Lower leg skin (tissue), 4 donors: ENCODE measurements at regions of chr17 and their contacts with region 1.

Region 1: GRCh38 chr17:45135192-45135977 is at the start of gene ACBD4:
- DNase-seq: peak; percentile 97 to 99
- H3K4me3 ChIP-seq: peak within 1 kb of the TSS; percentile 39
- CTCF ChIP-seq: peak; percentile 58 to 100 (median 100)
- POLR2A ChIP-seq: no peak
- total RNA-seq, gene ACBD4: 8.2 to 14.9 (median 10.1) TPM

Region 2: GRCh38 chr17:45197555-45198334 is 62.4 kb after region 1 on chr17:
- intact Hi-C with region 1: loop called (anchors 5 kb)
- DNase-seq: peak; percentile 80 to 98
- H3K4me3 ChIP-seq: no peak overlapping the region
- CTCF ChIP-seq: peak in 2 of 3 donors; percentile 32 to 97
- POLR2A ChIP-seq: no peak

Region 3: DNA sequence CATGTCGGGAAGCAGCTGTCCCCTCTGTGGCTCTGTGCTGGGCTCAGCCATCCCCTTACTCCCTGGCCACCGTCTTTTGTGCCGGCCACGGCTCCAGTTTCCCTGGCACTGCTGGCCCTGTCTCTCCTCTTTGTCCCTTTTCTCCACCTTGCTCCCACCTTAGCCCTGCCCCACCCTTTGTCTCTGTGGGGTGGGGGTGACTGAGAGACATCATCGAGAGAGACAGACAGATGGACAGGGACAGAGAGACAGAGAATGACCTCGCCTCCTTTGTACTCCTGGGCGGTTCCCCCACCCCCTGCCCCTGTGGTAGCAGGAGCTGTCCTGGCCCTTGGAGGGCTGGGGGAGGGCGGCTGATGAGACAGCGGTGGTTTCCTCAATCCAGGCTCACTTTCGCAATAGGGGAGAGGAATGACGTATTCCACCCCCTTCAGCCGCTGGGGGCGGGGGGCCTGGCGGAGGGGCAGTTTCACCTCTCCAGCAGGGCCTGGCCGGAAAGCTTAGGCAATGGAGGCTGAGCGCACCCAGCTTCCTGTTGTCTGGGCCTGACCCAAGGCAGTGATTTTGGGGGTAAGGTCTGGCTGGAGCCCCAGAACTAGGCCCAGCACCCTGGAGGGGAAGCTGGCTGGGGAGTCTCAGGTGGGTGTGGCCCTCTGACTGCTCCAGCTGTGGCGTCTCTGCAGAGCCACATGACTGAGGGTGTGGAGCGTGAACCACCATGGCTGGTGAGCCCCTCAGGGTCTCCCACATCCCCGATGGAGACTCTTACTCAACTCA is 93.6 kb after region 1 on chr17:
- intact Hi-C with region 1: no loop called
- DNase-seq: peak; percentile 87 to 97
- H3K4me3 ChIP-seq: no peak overlapping the region
- CTCF ChIP-seq: no peak
- POLR2A ChIP-seq: no peak